ENCODE measurements at regions of chr15 and their contacts with region 1.

Region 1: GRCh38 chr15:67101911-67102598 is 36.7 kb downstream of the SMAD3 start:
- DNase-seq: peak; percentile 57
- H3K4me3 Mint-ChIP-seq: no peak overlapping the region
- H3K27ac Mint-ChIP-seq: no peak overlapping the region
- H3K4me1 Mint-ChIP-seq: peaks cover 61% of the 10 kb centered on the region
- H3K27me3 Mint-ChIP-seq: no peaks in the 10 kb centered on the region

Region 2: DNA sequence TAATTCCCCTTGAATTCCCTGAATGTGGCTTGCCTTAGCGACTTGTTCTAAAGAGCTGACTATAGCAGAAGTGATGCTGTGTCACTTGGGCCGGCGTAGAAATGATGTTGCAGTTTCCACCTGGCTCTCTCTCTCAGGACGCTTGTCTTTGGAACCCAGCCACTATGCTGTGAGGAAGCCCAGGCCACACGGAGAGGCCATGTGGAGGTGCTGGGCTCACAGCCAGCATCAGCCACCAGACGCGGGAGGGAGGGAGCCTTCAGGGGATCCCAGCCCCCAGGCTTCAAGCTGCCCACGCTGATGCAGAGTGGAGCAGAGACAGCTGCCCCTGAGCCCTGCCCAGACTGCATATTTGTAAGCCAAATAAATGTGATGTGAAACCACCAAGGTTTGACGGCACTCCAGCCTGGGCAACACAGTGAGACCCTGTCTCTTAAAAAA is 1779.0 kb before region 1 on chr15:
- intact Hi-C with region 1: no loop called
- DNase-seq: no peak
- H3K4me3 Mint-ChIP-seq: no peak overlapping the region
- H3K27ac Mint-ChIP-seq: no peak overlapping the region
- H3K4me1 Mint-ChIP-seq: no peaks in the 10 kb centered on the region
- H3K27me3 Mint-ChIP-seq: peaks cover 14% of the 10 kb centered on the region

Region 3: GRCh38 chr15:67085818-67086636 is 16.0 kb before region 1 on chr15:
- intact Hi-C with region 1: loop called (anchors 1 kb)
- DNase-seq: peak; percentile 44
- H3K4me3 Mint-ChIP-seq: peak overlapping the region; percentile 24
- H3K27ac Mint-ChIP-seq: peak overlapping the region; percentile 74
- H3K4me1 Mint-ChIP-seq: peaks cover 94% of the 10 kb centered on the region
- H3K27me3 Mint-ChIP-seq: no peaks in the 10 kb centered on the region

Region 4: DNA sequence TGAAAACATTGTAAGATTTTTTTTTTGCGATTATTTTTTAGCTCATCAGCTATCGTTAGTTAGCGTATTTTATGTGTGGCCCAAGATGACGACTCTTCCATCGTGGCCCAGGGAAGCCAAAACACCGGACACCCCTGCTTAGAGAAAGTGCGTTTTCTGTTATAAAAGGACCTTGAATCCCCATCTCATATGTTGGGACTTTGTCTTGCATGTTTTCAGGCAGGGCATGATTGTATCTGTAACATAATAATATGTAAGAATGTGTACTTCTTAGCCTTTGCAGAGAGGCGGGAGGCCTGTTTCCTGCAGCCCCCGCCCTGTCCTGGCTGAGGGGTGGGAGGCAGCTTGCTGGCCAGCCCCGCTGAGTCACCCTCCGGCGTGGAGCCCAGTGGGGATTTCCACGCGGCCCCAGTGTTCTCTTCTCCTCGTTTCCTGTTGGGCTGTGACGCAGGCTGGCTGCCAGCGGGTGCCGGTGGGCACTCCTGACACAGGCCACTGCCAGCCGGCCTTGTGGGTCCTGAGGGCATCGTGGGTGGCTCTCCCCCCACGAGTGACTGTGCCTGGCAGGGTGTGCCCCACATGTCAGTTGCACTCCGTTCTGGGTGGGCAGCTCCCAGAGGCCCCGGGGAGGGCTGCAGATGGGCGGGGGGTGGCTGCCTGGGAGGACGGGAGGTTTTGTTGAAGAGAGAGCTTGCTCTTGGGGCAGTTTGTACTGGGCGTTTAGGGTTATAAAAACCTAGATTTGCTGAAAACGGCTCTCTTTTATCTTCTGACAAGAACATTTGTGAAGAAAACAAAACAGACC is 19.0 kb after region 1 on chr15:
- intact Hi-C with region 1: loop called (anchors 1 kb)
- DNase-seq: peak; percentile 77
- H3K4me3 Mint-ChIP-seq: peak overlapping the region; percentile 53
- H3K27ac Mint-ChIP-seq: peak overlapping the region; percentile 94
- H3K4me1 Mint-ChIP-seq: peaks cover 76% of the 10 kb centered on the region
- H3K27me3 Mint-ChIP-seq: no peaks in the 10 kb centered on the region

Region 5: GRCh38 chr15:67134067-67134838 is 32.2 kb after region 1 on chr15:
- intact Hi-C with region 1: loop called (anchors 1 kb)
- DNase-seq: peak; percentile 56
- H3K4me3 Mint-ChIP-seq: peak overlapping the region; percentile 79
- H3K27ac Mint-ChIP-seq: peak overlapping the region; percentile 97
- H3K4me1 Mint-ChIP-seq: peaks cover 81% of the 10 kb centered on the region
- H3K27me3 Mint-ChIP-seq: no peaks in the 10 kb centered on the region

Region 6: GRCh38 chr15:67240235-67241131 is 138.4 kb after region 1 on chr15:
- intact Hi-C with region 1: loop called (anchors 1 kb)
- DNase-seq: no peak
- H3K4me3 Mint-ChIP-seq: peak overlapping the region; percentile 36
- H3K27ac Mint-ChIP-seq: peak overlapping the region; percentile 66
- H3K4me1 Mint-ChIP-seq: peaks cover 45% of the 10 kb centered on the region
- H3K27me3 Mint-ChIP-seq: no peaks in the 10 kb centered on the region

Measured in activated T-helper 2 cell treated with anti-CD3 and anti-CD28 coated beads, Interferon-gamma antibody, Interleukin-2, Interleukin-4, amounts not matched to agents 10 μg/mL and 5 μg/mL and 100 μg/mL, durations not matched to agents 14 hours and 24 hours and 36 hours (primary cell).